ENCODE measurements at regions of chr7 and their contacts with region 1.

Region 1: GRCh38 chr7:116525913-116526861 is 1.4 kb downstream of the CAV1 start:
- DNase-seq: peak; percentile 85
- H3K4me3 Mint-ChIP-seq: peak overlapping the region; percentile 99
- H3K27ac Mint-ChIP-seq: peak overlapping the region; percentile 90
- H3K4me1 Mint-ChIP-seq: peaks cover 39% of the 10 kb centered on the region
- H3K27me3 Mint-ChIP-seq: no peaks in the 10 kb centered on the region
- CTCF ChIP-seq: peak; percentile 81

Region 2: GRCh38 chr7:116211006-116211912 is 314.9 kb before region 1 on chr7:
- CTCF ChIA-PET with region 1: interaction called, 4 read pairs
- POLR2A ChIA-PET with region 1: interaction called, 54 read pairs
- intact Hi-C with region 1: no loop called
- DNase-seq: peak; percentile 90
- H3K4me3 Mint-ChIP-seq: peak overlapping the region; percentile 95
- H3K27ac Mint-ChIP-seq: peak overlapping the region; percentile 98
- H3K4me1 Mint-ChIP-seq: peaks cover 19% of the 10 kb centered on the region
- H3K27me3 Mint-ChIP-seq: no peaks in the 10 kb centered on the region
- CTCF ChIP-seq: no peak

Region 3: DNA sequence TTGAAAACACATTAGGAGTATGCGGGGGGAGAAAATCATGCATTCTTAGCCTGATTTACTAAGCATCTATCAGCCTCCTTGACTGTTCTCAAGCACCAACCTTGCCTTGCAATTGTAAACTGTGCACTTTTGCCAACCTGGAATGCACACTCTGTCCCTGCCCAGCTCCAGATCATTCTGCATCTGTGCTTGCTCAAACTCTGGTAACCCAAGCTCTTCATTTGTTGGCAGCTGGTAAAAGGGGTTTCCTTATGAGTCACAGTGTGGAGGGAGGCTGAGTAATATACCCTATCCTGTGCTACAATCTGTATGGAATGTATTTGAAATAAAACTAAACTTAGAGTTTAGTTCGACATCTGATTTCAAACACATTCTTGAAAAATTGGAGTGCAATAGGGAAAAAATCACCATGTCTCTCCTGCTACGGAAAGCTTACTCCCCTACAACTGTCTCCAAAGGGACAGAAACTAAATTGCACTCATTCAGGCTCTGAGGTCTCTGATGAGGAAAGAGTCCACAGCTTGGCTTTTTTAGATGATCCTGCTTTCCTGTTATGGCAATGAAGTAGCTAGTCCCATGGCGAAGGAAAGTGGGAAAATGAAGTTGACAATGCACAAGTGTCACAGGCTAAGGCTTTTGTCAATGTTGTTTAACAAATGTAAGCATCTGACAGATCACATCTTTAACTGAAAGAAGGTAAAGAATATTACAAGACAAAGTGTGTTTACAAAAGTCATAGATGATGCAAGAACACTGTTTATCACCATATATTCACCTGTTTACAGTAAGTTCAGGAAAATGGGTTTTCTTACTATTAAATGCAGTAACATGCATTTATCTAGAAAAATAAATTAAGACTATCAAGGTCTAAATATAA is 254.0 kb before region 1 on chr7:
- CTCF ChIA-PET with region 1: interaction called, 11 read pairs
- POLR2A ChIA-PET with region 1: interaction called, 48 read pairs
- intact Hi-C with region 1: no loop called
- DNase-seq: peak; percentile 96
- H3K4me3 Mint-ChIP-seq: peak overlapping the region; percentile 58
- H3K27ac Mint-ChIP-seq: peak overlapping the region; percentile 82
- H3K4me1 Mint-ChIP-seq: peaks cover 47% of the 10 kb centered on the region
- H3K27me3 Mint-ChIP-seq: no peaks in the 10 kb centered on the region
- CTCF ChIP-seq: no peak

Region 4: DNA sequence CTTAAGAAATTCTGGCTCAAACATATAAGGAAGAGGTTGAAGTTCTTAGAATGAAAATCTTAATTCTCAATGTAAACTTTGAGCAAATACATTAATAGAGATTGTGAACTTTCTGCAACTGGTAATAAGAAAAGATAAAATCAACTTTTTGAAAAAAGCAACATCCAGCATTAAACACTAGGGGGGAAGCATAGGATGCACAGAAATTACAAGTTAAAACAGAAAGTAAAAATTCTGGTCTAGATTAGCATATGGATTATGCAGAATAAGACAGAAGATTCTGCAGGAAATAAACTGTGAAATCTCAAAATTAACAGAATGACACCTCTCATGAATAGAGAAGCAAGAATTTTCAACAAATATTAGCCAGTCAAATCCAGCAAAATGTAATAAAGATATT is 64.7 kb before region 1 on chr7:
- CTCF ChIA-PET with region 1: interaction called, 4 read pairs
- POLR2A ChIA-PET with region 1: interaction called, 6 read pairs
- intact Hi-C with region 1: loop called (anchors 5 kb)
- DNase-seq: no peak
- H3K4me3 Mint-ChIP-seq: no peak overlapping the region
- H3K27ac Mint-ChIP-seq: no peak overlapping the region
- H3K4me1 Mint-ChIP-seq: peaks cover 14% of the 10 kb centered on the region
- H3K27me3 Mint-ChIP-seq: no peaks in the 10 kb centered on the region
- CTCF ChIP-seq: no peak

Region 5: GRCh38 chr7:116571037-116571436 is 44.9 kb after region 1 on chr7:
- CTCF ChIA-PET with region 1: interaction called, 18 read pairs
- POLR2A ChIA-PET with region 1: interaction called, 109 read pairs
- intact Hi-C with region 1: loop called (anchors 5 kb)
- DNase-seq: peak; percentile 58
- H3K4me3 Mint-ChIP-seq: peak overlapping the region; percentile 26
- H3K27ac Mint-ChIP-seq: peak overlapping the region; percentile 47
- H3K4me1 Mint-ChIP-seq: peaks cover 42% of the 10 kb centered on the region
- H3K27me3 Mint-ChIP-seq: no peaks in the 10 kb centered on the region
- CTCF ChIP-seq: no peak

Region 6: DNA sequence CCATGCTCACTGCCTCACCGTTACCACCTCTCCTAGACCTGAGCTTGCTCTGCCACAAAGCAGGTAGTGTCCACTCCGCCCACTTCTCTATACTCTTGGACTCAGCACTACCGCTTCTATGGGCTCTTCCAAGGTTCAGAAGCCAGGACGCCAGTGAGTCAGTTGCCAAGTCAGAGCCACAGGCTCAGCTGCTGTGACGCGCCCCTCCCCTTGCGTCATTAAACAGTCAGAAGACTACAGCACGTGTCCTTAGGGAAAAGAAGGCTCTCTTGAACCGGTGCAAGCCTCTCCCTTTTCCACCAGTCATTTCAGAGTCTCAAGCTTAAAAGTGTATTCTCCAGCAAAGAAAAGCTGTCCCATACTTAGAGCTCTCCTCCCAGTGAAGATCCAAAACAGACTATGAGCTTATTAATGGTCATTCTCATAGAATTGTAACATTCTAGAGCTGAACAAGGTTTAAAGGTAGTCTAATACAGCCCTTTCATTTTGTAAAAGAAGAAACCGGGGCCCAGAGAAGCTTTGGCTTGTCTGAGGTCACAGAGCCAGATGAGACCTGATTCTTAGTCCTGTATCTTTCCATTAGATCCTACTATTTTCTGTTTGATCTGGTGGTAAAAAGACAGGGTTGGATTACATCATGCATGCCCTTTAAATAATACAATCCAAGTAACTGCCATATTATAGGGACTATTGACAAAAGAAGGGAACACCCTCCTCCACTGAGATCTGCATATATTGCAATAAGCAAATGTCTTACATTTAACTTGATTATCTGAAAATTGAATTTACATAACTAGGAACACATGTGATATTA is 105.0 kb after region 1 on chr7:
- CTCF ChIA-PET with region 1: no interaction called
- POLR2A ChIA-PET with region 1: interaction called, 31 read pairs
- intact Hi-C with region 1: no loop called
- DNase-seq: peak; percentile 97
- H3K4me3 Mint-ChIP-seq: peak overlapping the region; percentile 62
- H3K27ac Mint-ChIP-seq: peak overlapping the region; percentile 94
- H3K4me1 Mint-ChIP-seq: peaks cover 48% of the 10 kb centered on the region
- H3K27me3 Mint-ChIP-seq: no peaks in the 10 kb centered on the region
- CTCF ChIP-seq: no peak

Region 7: GRCh38 chr7:116644628-116645027 is 118.4 kb after region 1 on chr7:
- CTCF ChIA-PET with region 1: no interaction called
- POLR2A ChIA-PET with region 1: no interaction called
- intact Hi-C with region 1: no loop called
- DNase-seq: no peak
- H3K4me3 Mint-ChIP-seq: no peak overlapping the region
- H3K27ac Mint-ChIP-seq: no peak overlapping the region
- H3K4me1 Mint-ChIP-seq: no peaks in the 10 kb centered on the region
- H3K27me3 Mint-ChIP-seq: no peaks in the 10 kb centered on the region
- CTCF ChIP-seq: no peak

Region 8: GRCh38 chr7:116988363-116988989 is 462.3 kb after region 1 on chr7:
- CTCF ChIA-PET with region 1: no interaction called
- POLR2A ChIA-PET with region 1: no interaction called
- intact Hi-C with region 1: no loop called
- DNase-seq: no peak
- H3K4me3 Mint-ChIP-seq: no peak overlapping the region
- H3K27ac Mint-ChIP-seq: no peak overlapping the region
- H3K4me1 Mint-ChIP-seq: no peaks in the 10 kb centered on the region
- H3K27me3 Mint-ChIP-seq: no peaks in the 10 kb centered on the region
- CTCF ChIP-seq: peak; percentile 36

Measured in MCF 10A (cell line).